CD8-positive, alpha-beta T cell (primary cell): ENCODE measurements at regions of chr1 and their contacts with region 1.

Region 1: GRCh38 chr1:73218995-73219546 is 936.7 kb upstream of the NEGR1 start:
- DNase-seq: no peak
- ATAC-seq: no peak
- H3K4me3 ChIP-seq: no peak overlapping the region
- H3K4me3 Mint-ChIP-seq: no peak overlapping the region
- H3K27ac ChIP-seq: no peak overlapping the region
- H3K27ac Mint-ChIP-seq: no peak overlapping the region
- H3K4me1 ChIP-seq: no peaks in the 10 kb centered on the region
- H3K4me1 Mint-ChIP-seq: no peaks in the 10 kb centered on the region
- H3K27me3 ChIP-seq: no peaks in the 10 kb centered on the region
- H3K27me3 Mint-ChIP-seq: no peaks in the 10 kb centered on the region
- CTCF ChIP-seq: no peak

Region 2: DNA sequence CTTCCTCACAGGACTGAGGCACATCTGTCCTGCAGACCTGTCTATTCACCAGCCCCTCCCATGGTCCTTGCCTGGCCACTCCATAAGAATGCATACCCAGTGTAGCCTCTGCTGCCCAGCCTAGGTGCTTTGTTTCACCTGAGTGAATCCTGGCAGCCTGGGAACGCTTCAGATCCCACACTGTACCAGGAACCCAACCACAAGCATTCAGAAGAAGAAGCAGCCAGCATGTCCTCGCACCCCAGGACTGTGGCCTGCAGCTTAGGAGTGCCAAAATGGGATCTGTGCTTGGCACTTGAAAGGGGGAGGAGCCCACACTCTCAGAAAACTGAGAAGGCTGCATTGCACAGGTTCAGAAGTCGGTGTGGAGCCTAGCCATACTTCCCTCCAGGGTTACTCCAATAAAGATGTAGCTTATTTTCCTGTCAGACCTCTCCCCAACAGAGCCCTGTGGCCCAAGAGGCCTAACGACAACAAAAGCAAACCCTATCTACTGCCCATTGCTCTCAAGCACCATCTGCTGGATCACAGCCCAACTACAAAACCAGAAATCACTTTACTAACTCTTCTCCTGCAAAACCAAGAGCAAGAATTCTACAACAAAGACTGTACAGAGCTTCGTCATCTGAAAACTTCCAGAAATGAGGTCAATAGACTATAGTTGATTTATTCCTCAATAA is 13.6 kb before region 1 on chr1:
- CTCF ChIA-PET with region 1: no interaction called
- POLR2A ChIA-PET with region 1: no interaction called
- intact Hi-C with region 1: loop called in 1 of 2 experiments (anchors 2 kb)
- DNase-seq: no peak
- ATAC-seq: no peak
- H3K4me3 ChIP-seq: no peak overlapping the region
- H3K4me3 Mint-ChIP-seq: no peak overlapping the region
- H3K27ac ChIP-seq: no peak overlapping the region
- H3K27ac Mint-ChIP-seq: no peak overlapping the region
- H3K4me1 ChIP-seq: no peaks in the 10 kb centered on the region
- H3K4me1 Mint-ChIP-seq: no peaks in the 10 kb centered on the region
- H3K27me3 ChIP-seq: no peaks in the 10 kb centered on the region
- H3K27me3 Mint-ChIP-seq: no peaks in the 10 kb centered on the region
- CTCF ChIP-seq: no peak

Region 3: DNA sequence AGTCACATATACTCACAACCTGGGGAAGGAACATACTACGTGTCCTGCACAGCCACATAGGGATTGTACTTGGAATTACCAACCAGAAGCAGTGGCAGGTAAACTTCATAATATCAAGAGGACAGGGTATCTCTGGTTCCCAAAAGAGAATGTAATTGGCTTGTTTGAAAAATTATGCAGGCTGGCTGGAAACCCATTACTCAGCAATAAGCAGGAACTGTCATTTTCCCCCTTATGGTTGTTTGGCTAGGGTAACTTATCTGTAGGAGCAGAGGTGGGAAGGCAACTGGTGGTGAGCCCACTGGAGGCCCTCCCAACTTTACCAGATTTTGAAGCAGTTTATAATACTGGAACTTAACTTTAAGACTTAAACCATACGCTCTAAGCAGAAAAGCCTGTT is 54.8 kb after region 1 on chr1:
- CTCF ChIA-PET with region 1: no interaction called
- POLR2A ChIA-PET with region 1: no interaction called
- intact Hi-C with region 1: no loop called
- DNase-seq: no peak
- ATAC-seq: no peak
- H3K4me3 ChIP-seq: no peak overlapping the region
- H3K4me3 Mint-ChIP-seq: no peak overlapping the region
- H3K27ac ChIP-seq: no peak overlapping the region
- H3K27ac Mint-ChIP-seq: no peak overlapping the region
- H3K4me1 ChIP-seq: no peaks in the 10 kb centered on the region
- H3K4me1 Mint-ChIP-seq: no peaks in the 10 kb centered on the region
- H3K27me3 ChIP-seq: no peaks in the 10 kb centered on the region
- H3K27me3 Mint-ChIP-seq: no peaks in the 10 kb centered on the region
- CTCF ChIP-seq: no peak